HCT116 (cell line): ENCODE measurements at regions of chr3 and their contacts with region 1.

Region 1: DNA sequence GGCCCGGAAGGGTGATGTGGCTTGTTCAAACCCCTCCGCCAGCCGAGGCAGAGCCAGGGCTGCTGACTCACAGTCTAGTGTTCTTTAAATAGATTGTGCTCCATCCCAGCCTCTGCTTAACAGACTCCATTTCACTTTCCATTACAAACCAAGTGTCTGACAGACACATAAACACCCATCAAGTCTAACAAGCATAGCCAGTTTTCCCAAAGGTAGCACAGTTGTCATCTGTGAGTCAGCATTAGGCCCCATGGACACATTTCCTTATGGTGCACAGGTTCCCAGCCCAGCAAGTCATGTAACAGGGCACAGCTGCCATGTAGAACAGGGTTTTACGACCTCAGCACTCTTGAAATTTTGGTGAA is 109.9 kb upstream of the RAP2B start:
- DNase-seq: peak; percentile 95
- ATAC-seq: peak; percentile 81
- H3K4me3 ChIP-seq: peak overlapping the region; percentile 8 to 28; a peak in 3 of 4 replicates
- H3K27ac ChIP-seq: peak overlapping the region; percentile 77
- H3K4me1 ChIP-seq: peaks cover 22 to 40% of the 10 kb centered on the region in 2 experiments
- H3K27me3 ChIP-seq: no peaks in the 10 kb centered on the region
- CTCF ChIP-seq: no peak
- POLR2A ChIP-seq: no peak
- RAD21 ChIP-seq: peak; percentile 45

Region 2: DNA sequence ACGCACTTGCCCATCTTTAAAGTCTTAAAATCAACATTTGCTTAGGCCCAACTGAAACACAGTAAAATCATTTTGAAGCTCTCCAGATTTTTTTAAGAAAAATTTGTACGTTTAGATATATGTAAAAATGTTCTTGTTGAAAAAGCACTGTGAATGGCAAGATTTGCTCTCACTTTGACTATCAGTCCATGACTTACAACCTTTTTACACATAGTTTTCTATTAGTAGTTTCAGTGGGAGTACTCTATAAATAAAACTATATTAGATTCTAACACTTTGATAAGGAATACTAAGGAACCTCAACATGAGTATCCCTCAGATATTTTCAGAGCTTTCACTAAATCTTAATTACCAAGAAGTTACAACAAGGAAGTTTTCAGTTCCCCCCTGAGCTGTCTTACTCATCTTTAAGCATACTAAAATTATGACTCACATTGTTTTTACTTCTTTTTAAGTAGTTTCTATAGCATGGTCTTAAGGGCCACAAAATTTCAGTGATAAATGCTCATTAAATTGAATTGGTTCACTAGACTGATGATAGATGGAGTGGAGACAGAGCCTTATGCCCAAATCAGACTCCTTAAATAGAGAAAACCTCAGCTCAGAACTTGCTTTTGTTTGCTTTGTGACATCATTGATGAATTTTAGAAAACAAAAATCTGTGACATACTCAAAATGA is 78.4 kb after region 1 on chr3:
- CTCF ChIA-PET with region 1: no interaction called
- POLR2A ChIA-PET with region 1: interaction called, 4 read pairs
- RAD21 ChIA-PET with region 1: no interaction called
- intact Hi-C with region 1: loop called (anchors 1 kb)
- DNase-seq: peak; percentile 57
- ATAC-seq: peak; percentile 75
- H3K4me3 ChIP-seq: peak overlapping the region in 1 of 2 experiments; percentile 31; a peak in 2 of 4 replicates
- H3K27ac ChIP-seq: peak overlapping the region; percentile 66
- H3K4me1 ChIP-seq: peaks cover 11 to 19% of the 10 kb centered on the region in 2 experiments
- H3K27me3 ChIP-seq: no peaks in the 10 kb centered on the region
- CTCF ChIP-seq: no peak
- POLR2A ChIP-seq: no peak
- RAD21 ChIP-seq: peak; percentile 18; the same call in 1 of the 2 replicates

Region 3: GRCh38 chr3:153138276-153139210 is 86.5 kb after region 1 on chr3:
- CTCF ChIA-PET with region 1: no interaction called
- POLR2A ChIA-PET with region 1: interaction called, 4 read pairs
- RAD21 ChIA-PET with region 1: interaction called in 1 of 2 experiments, 3 read pairs
- intact Hi-C with region 1: loop called (anchors 2 kb)
- DNase-seq: peak; percentile 90
- ATAC-seq: peak; percentile 57
- H3K4me3 ChIP-seq: no peak overlapping the region; a peak in 1 of 4 replicates
- H3K27ac ChIP-seq: peak overlapping the region; percentile 80
- H3K4me1 ChIP-seq: peaks cover 26 to 45% of the 10 kb centered on the region in 2 experiments
- H3K27me3 ChIP-seq: no peaks in the 10 kb centered on the region
- CTCF ChIP-seq: no peak
- POLR2A ChIP-seq: no peak
- RAD21 ChIP-seq: peak; percentile 23; the same call in 1 of the 2 replicates